Left cardiac atrium (tissue), 4 donors: ENCODE measurements at regions of chr17 and their contacts with region 1.

Region 1: DNA sequence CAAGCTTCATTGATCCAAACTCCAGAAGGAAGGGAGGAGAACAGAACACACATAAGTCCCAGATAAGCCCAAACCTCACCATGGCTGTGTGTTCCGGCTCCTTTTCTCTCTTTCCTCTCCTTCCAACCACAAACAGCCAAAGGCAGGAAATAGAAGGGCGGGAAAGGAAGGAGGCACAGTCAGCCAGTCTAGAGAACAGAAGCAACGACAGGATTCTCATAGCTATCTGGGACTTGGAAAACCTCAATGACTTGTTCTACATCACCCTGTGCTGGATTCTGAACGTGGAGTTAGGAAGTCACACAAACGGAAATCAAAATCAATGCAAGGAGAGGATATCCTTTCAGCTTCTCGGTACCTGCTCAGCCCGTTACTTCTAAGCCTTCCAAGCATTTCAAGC is 9.0 kb downstream of the CRK start:
- DNase-seq: no peak
- ATAC-seq: peak in 1 of 2 donors; percentile 41

Region 2: GRCh38 chr17:1413281-1413791 is 33.7 kb before region 1 on chr17:
- intact Hi-C with region 1: loop called in 1 of 2 experiments (anchors 5 kb)
- DNase-seq: peak; percentile 91
- ATAC-seq: peak; percentile 93 to 95

Region 3: DNA sequence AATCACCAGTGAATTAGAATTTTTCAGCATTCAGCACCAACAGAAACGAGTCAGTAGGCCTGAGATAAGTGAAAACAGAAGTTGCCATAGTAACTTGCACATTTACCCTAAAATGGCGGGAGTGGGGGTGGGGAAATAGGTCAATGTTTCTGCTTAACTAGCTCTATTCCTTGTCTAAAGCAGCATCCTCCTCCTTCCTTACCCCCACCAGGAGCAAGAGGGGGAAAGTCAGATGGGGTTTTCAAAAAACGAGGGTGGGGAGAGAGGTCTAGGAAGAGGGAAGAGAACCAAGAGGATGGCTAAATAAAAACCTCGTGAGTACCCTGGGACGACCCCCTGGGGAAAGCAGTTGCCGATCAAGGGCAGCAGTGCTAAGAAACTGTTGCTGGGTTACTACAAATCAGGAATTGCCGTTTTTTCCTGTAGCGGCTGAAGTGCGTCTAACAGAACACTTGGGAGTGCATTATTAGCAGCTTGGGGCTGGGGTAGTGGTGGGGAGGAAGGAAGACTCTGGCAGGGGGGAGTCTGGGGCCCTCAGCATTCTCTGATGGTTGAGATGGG is 988.2 kb after region 1 on chr17:
- intact Hi-C with region 1: no loop called
- DNase-seq: no peak
- ATAC-seq: peak in 1 of 2 donors; percentile 15